H1 (cell line): ENCODE measurements at regions of chr16 and their contacts with region 1.

Region 1: GRCh38 chr16:29805378-29806098 is 791 bp upstream of the MAZ start:
- DNase-seq: peak; percentile 92 to 96
- H3K4me3 ChIP-seq: peak overlapping the region; percentile 54 to 79 (median 72)
- H3K27ac ChIP-seq: peak overlapping the region; percentile 86
- H3K4me1 ChIP-seq: peaks cover 0 to 35% (median 25%) of the 10 kb centered on the region in 4 experiments; a peak in 6 of 7 replicates
- H3K27me3 ChIP-seq: no peaks in the 10 kb centered on the region
- CTCF ChIP-seq: no peak
- EP300 ChIP-seq: 0 out of 3 replicates have a peak, but pooled peaks of 1 of the 2 experiments have one; percentile 6
- POLR2A ChIP-seq: peak in 1 of 2 experiments; percentile 76; a peak in 2 of 3 replicates
- RAD21 ChIP-seq: no peak; a peak in 1 of 4 replicates

Region 2: DNA sequence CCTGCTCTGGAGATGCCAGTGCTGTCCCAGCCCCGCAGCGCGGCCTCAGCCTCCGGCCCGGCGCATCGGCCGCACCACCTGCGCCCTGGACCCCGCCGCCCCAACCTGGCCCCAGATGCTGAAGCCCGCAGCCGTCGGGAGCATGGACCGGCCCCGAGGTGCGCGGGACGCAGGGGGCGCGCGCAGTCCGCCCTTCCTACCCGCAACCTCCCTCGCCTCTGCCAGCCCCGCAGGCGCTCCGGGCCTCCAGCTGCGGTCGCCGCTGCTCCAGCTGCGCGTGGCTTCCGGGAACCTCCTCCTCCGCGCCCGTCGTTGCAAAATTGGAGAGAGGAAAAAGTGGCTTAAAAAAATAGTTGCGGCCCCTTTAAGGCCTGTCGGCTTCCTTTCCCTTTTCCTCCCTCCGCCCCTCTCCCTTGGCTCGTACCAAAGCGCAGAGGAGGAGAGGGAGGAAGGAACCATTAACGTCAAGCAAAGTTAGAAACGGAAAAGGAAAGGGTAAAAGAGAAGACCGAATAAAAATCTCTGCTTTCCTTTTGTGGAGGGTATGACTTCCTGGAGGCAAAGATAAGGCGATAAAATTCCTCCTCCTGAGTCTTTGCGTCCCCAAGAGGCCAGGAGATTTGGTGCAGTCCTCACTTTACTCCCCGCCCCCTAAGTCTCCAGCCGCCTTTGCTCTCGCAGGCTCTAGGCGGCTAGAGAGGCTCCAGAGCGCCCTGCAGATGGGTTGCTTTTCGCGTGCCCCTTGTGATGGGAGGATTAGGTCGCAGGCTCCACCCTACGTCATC is 57.5 kb after region 1 on chr16 and contains the start of gene CDIPT:
- CTCF ChIA-PET with region 1: no interaction called
- POLR2A ChIA-PET with region 1: interaction called, 10 read pairs
- DNase-seq: peak; percentile 91 to 93
- H3K4me3 ChIP-seq: peak within 1 kb of the TSS; percentile 82 to 90 (median 90)
- H3K27ac ChIP-seq: peak within 1 kb of the TSS; percentile 99
- H3K4me1 ChIP-seq: peaks cover 0 to 7% (median 3%) of the 10 kb centered on the region in 4 experiments; a peak in 3 of 7 replicates
- H3K27me3 ChIP-seq: no peaks in the 10 kb centered on the region
- CTCF ChIP-seq: peak; percentile 73 to 94 (median 78)
- EP300 ChIP-seq: peak in 1 of 2 experiments; percentile 99; a peak in 2 of 3 replicates
- POLR2A ChIP-seq: peak in 1 of 2 experiments; percentile 55; a peak in 1 of 3 replicates
- RAD21 ChIP-seq: peak in 1 of 2 experiments; percentile 23; a peak in 2 of 4 replicates
- total RNA-seq, gene CDIPT: 69.2 and 70.9 TPM in 2 replicates